ENCODE measurements at regions of chr6 and their contacts with region 1.

Region 1: GRCh38 chr6:137944793-137945498 is 77.9 kb downstream of the TNFAIP3 start:
- DNase-seq: peak; percentile 36
- ATAC-seq: peak; percentile 37
- H3K4me3 Mint-ChIP-seq: no peak overlapping the region
- H3K27ac Mint-ChIP-seq: peak overlapping the region; percentile 23
- H3K4me1 Mint-ChIP-seq: peaks cover 52% of the 10 kb centered on the region
- H3K27me3 Mint-ChIP-seq: no peaks in the 10 kb centered on the region

Region 2: GRCh38 chr6:137878486-137879285 is 66.3 kb before region 1 on chr6:
- CTCF ChIA-PET with region 1: interaction called, 47 read pairs
- POLR2A ChIA-PET with region 1: interaction called, 5 read pairs
- intact Hi-C with region 1: loop called (anchors 1 kb)
- DNase-seq: no peak
- ATAC-seq: no peak
- H3K4me3 Mint-ChIP-seq: peak overlapping the region; percentile 60
- H3K27ac Mint-ChIP-seq: peak overlapping the region; percentile 99
- H3K4me1 Mint-ChIP-seq: peaks cover 86% of the 10 kb centered on the region
- H3K27me3 Mint-ChIP-seq: no peaks in the 10 kb centered on the region

Region 3: DNA sequence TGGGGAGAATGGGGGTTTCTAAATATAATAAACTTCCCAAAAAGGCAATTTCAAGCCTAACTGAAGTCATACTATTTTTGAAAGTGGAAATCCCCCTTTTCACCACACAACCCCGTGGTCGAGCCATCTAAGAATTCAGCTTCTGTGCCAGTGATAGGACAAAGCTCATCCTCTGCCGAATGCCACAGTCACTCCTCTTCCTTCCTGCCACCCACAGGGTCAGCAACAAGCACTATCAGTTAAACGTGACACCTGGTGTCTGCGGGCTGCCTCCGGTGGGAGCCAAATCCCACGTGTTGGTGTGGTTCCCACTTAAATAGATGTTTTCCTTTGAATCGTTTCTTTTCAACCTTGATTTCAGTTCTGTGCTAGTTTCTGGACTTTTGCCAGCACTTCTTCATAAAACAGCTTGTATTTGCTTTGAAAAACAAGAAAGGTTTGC is 17.1 kb before region 1 on chr6:
- CTCF ChIA-PET with region 1: interaction called, 18 read pairs
- POLR2A ChIA-PET with region 1: interaction called, 7 read pairs
- intact Hi-C with region 1: loop called in 1 of 2 experiments (anchors 1 kb)
- DNase-seq: peak; percentile 86
- ATAC-seq: peak; percentile 97
- H3K4me3 Mint-ChIP-seq: peak overlapping the region; percentile 59
- H3K27ac Mint-ChIP-seq: peak overlapping the region; percentile 94
- H3K4me1 Mint-ChIP-seq: peaks cover 58% of the 10 kb centered on the region
- H3K27me3 Mint-ChIP-seq: no peaks in the 10 kb centered on the region

Region 4: GRCh38 chr6:137958811-137959565 is 14.0 kb after region 1 on chr6:
- CTCF ChIA-PET with region 1: interaction called, 12 read pairs
- POLR2A ChIA-PET with region 1: no interaction called
- intact Hi-C with region 1: no loop called
- DNase-seq: no peak
- ATAC-seq: no peak
- H3K4me3 Mint-ChIP-seq: no peak overlapping the region
- H3K27ac Mint-ChIP-seq: no peak overlapping the region
- H3K4me1 Mint-ChIP-seq: peaks cover 4% of the 10 kb centered on the region
- H3K27me3 Mint-ChIP-seq: no peaks in the 10 kb centered on the region

Region 5: DNA sequence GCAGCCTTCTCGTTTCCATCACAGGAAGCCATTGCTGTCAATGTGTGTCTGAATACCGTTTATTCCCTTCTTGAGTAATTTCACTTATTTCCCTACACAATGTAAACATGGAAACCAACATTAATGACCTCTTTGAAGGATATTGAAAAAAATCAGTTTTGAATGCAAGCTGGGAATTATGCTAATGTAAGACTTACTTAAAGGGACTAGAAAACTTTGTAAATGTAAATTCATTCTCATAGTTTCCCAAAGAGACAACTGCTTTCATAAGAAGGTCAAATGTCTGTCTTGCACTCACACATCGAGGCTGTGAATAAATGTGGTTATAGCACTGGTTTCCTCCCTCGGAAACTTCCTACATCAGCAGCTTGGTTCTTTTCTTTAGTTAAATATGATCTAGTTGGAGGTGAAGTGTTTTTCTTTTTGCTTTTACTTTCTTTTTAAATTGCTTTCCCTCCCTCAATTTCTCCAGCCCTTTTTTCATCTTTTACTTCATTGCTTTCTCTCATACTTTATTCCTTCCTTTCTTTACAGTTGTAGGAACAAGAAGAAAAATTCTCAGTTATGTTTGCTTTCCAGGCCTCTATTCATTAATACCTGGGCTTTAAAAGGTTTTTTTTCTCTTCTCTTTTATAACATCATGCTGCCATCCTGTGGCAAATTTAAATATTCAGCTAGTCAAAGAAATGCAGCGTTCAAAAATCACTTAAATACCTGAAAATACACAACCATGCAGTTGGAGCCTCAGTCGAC is 30.4 kb after region 1 on chr6:
- CTCF ChIA-PET with region 1: interaction called, 14 read pairs
- POLR2A ChIA-PET with region 1: no interaction called
- intact Hi-C with region 1: loop called (anchors 1 to 2 kb)
- DNase-seq: peak; percentile 51
- ATAC-seq: peak; percentile 60
- H3K4me3 Mint-ChIP-seq: peak overlapping the region; percentile 55
- H3K27ac Mint-ChIP-seq: peak overlapping the region; percentile 90
- H3K4me1 Mint-ChIP-seq: peaks cover 72% of the 10 kb centered on the region
- H3K27me3 Mint-ChIP-seq: no peaks in the 10 kb centered on the region

Region 6: GRCh38 chr6:138025528-138025978 is 80.6 kb after region 1 on chr6:
- CTCF ChIA-PET with region 1: no interaction called
- POLR2A ChIA-PET with region 1: no interaction called
- intact Hi-C with region 1: no loop called
- DNase-seq: no peak
- ATAC-seq: no peak
- H3K4me3 Mint-ChIP-seq: no peak overlapping the region
- H3K27ac Mint-ChIP-seq: no peak overlapping the region
- H3K4me1 Mint-ChIP-seq: no peaks in the 10 kb centered on the region
- H3K27me3 Mint-ChIP-seq: peaks cover 2% of the 10 kb centered on the region

Measured in activated CD4-positive, alpha-beta T cell treated with anti-CD3 and anti-CD28 coated beads for 36 hours (primary cell).